Upper lobe of right lung (tissue), 1 donor: ENCODE measurements at regions of chrX and their contacts with region 1.

Region 1: GRCh38 chrX:12894074-12895030 is 12.1 kb upstream of the TLR8 start:
- DNase-seq: no peak
- ATAC-seq: peak; percentile 66
- H3K4me3 ChIP-seq: no peak overlapping the region
- H3K27ac ChIP-seq: no peak overlapping the region
- H3K4me1 ChIP-seq: no peaks in the 10 kb centered on the region
- H3K27me3 ChIP-seq: no peaks in the 10 kb centered on the region
- CTCF ChIP-seq: peak; percentile 64

Region 2: DNA sequence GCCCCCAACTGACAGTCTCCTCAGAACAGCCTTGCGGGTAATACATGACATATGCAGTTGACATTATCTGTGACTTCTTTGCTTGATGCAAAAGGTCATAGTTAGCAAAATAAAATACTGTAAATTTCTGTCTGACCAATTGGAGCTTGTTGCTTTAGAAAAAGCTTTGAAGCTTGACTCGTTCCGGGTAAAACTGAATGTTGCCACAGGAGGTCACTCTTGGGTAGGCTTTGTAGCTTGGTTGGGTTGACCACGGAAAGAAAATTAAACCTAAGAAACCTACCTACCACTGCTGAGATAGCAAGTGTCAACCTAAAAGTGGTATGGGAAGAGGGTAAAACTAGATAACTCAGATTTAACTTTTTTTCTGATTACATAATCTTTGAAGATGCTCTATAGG is 79.9 kb before region 1 on chrX:
- intact Hi-C with region 1: loop called (anchors 10 kb)
- DNase-seq: no peak
- ATAC-seq: peak; percentile 72
- H3K4me3 ChIP-seq: no peak overlapping the region
- H3K27ac ChIP-seq: no peak overlapping the region
- H3K4me1 ChIP-seq: no peaks in the 10 kb centered on the region
- H3K27me3 ChIP-seq: no peaks in the 10 kb centered on the region
- CTCF ChIP-seq: peak; percentile 44